ENCODE measurements at regions of chr1 and their contacts with region 1.

Region 1: DNA sequence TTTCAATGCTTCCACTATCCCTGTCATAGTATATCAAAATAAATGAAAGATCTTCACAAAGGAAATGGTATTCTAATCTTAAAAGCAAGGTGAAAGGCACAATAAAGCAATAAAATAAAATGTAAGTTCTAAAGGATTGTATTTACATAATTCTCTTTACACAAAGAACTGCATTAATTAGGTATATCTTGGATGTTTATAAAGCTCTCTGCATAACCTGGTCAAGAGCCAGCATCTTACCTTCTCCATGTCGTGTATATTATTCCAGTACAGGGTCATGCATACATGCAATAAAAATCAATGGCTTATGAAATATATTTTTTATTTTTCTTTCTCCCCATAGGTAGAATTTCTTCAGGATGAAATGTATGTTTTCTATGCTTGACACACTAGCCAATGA is 63.8 kb downstream of the GON4L start:
- DNase-seq: no peak
- H3K4me3 ChIP-seq: no peak overlapping the region
- H3K27ac ChIP-seq: no peak overlapping the region
- H3K4me1 ChIP-seq: no peaks in the 10 kb centered on the region
- H3K27me3 ChIP-seq: no peaks in the 10 kb centered on the region
- CTCF ChIP-seq: no peak
- POLR2A ChIP-seq: no peak

Region 2: DNA sequence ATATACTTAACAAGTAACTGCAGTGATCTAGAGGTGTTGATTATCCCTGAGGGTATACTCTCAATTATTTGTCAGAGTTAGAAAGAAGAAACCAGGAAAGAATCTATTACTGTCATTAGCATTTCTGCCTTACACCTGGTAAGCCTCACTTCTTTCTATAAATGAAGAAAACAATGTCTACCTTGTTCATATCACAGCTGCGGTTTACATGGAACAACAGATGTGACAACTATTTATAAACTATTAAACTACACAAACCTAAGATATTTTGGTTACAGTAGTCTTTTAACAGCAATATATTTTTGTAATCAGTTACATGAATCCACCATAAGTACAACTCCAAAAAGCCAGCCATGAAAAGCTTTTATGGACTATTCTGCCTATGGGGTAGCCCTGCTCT is 23.1 kb after region 1 on chr1:
- CTCF ChIA-PET with region 1: interaction called, 3 read pairs
- POLR2A ChIA-PET with region 1: interaction called, 10 read pairs
- dilution Hi-C with region 1: no loop called
- intact Hi-C with region 1: no loop called
- DNase-seq: no peak
- H3K4me3 ChIP-seq: no peak overlapping the region
- H3K27ac ChIP-seq: no peak overlapping the region
- H3K4me1 ChIP-seq: no peaks in the 10 kb centered on the region
- H3K27me3 ChIP-seq: no peaks in the 10 kb centered on the region
- CTCF ChIP-seq: no peak
- POLR2A ChIP-seq: no peak

Measured in endothelial cell of umbilical vein (primary cell).